ENCODE measurements at regions of chr12 and their contacts with region 1.

Region 1: GRCh38 chr12:112937741-112938719 is at the start of gene OAS3:
- DNase-seq: peak; percentile 95
- H3K4me3 Mint-ChIP-seq: peak within 1 kb of the TSS; percentile 89
- H3K27ac Mint-ChIP-seq: peak within 1 kb of the TSS; percentile 96
- H3K4me1 Mint-ChIP-seq: peaks cover 48% of the 10 kb centered on the region
- H3K27me3 Mint-ChIP-seq: no peaks in the 10 kb centered on the region
- total RNA-seq, gene OAS3: 47.5 and 48.9 TPM in 2 replicates

Region 2: GRCh38 chr12:112906712-112907414 is 31.2 kb before region 1 on chr12 and contains the start of gene OAS1:
- intact Hi-C with region 1: loop called (anchors 1 kb)
- DNase-seq: peak; percentile 88
- H3K4me3 Mint-ChIP-seq: peak within 1 kb of the TSS; percentile 100
- H3K27ac Mint-ChIP-seq: peak within 1 kb of the TSS; percentile 97
- H3K4me1 Mint-ChIP-seq: peaks cover 81% of the 10 kb centered on the region
- H3K27me3 Mint-ChIP-seq: no peaks in the 10 kb centered on the region
- total RNA-seq, gene OAS1: 24.5 and 28.0 TPM in 2 replicates

Measured in activated CD4-positive, alpha-beta T cell treated with anti-CD3 and anti-CD28 coated beads, Interleukin-2, amount 10 ng/mL, durations not matched to agents 24 days and 14 days (primary cell).